Activated CD4-positive, alpha-beta T cell treated with anti-CD3 and anti-CD28 coated beads for 36 hours (primary cell): ENCODE measurements at regions of chr2 and their contacts with region 1.

Region 1: DNA sequence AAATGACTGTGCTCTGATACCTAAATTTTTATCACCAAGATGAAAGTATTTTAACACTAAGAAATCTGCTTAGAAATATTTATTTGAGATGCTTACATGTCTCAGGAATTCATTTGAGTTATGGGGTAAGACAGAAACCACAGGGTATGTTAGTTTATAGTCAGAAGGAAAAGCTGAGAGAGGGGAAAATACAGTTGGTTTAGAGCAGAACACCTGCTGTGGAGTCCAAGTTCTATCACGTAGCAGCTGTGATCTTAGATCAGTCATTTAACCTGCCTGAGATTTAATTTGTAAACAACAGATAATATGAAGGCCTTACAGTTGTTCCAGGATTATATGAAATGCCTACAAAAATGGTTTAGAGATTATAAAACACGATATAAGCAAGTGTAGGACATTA is 29.0 kb downstream of the PDE6D start:
- DNase-seq: no peak
- ATAC-seq: no peak
- H3K4me3 Mint-ChIP-seq: no peak overlapping the region
- H3K27ac Mint-ChIP-seq: no peak overlapping the region
- H3K4me1 Mint-ChIP-seq: no peaks in the 10 kb centered on the region
- H3K27me3 Mint-ChIP-seq: no peaks in the 10 kb centered on the region

Region 2: GRCh38 chr2:231939022-231939421 is 187.0 kb after region 1 on chr2:
- CTCF ChIA-PET with region 1: no interaction called
- POLR2A ChIA-PET with region 1: interaction called, 11 read pairs
- intact Hi-C with region 1: no loop called
- DNase-seq: no peak
- ATAC-seq: no peak
- H3K4me3 Mint-ChIP-seq: no peak overlapping the region
- H3K27ac Mint-ChIP-seq: no peak overlapping the region
- H3K4me1 Mint-ChIP-seq: peaks cover 5% of the 10 kb centered on the region
- H3K27me3 Mint-ChIP-seq: no peaks in the 10 kb centered on the region